AG04450 (cell line): ENCODE measurements at regions of chr22 and their contacts with region 1.

Region 1: DNA sequence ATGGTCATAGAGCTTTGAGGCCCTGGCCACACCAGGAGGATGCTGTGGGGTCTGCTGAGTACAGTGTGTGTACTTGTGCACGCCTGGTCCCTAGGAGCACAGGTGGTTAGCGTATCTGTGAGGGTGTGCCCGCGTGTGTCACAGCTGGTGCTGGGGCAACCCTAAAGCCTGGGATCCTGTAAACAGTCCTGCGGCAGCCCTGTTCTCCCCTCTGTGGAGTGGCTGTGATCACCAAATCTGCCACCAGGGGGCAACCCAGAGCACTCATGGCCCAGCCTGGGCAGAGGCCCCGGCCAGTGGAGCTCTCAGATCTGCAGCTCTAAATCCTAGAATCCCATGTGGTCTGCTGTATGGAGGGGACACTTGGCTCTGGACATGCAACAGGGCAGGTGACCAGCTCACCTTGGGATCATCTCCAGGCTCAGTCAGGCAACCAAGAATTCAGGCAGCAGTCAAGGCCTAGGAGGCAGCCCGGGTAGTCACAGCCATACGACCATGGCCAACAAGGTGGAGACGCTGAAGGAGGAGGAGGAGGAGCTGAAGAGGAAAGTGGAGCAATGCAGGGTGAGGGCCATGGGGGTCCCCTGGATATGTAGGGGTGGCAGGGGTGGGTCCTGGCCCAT is 3.9 kb downstream of the SH3BP1 start:
- DNase-seq: peak; percentile 11
- H3K4me3 ChIP-seq: no peak overlapping the region
- H3K27ac ChIP-seq: no peak overlapping the region
- H3K27me3 ChIP-seq: no peaks in the 10 kb centered on the region
- CTCF ChIP-seq: peak; percentile 96

Region 2: GRCh38 chr22:37625737-37626521 is 17.4 kb before region 1 on chr22:
- CTCF ChIA-PET with region 1: interaction called, 57 read pairs
- POLR2A ChIA-PET with region 1: interaction called, 3 read pairs
- DNase-seq: no peak
- H3K4me3 ChIP-seq: no peak overlapping the region
- H3K27ac ChIP-seq: peak overlapping the region; percentile 21
- H3K27me3 ChIP-seq: no peaks in the 10 kb centered on the region
- CTCF ChIP-seq: no peak

Region 3: DNA sequence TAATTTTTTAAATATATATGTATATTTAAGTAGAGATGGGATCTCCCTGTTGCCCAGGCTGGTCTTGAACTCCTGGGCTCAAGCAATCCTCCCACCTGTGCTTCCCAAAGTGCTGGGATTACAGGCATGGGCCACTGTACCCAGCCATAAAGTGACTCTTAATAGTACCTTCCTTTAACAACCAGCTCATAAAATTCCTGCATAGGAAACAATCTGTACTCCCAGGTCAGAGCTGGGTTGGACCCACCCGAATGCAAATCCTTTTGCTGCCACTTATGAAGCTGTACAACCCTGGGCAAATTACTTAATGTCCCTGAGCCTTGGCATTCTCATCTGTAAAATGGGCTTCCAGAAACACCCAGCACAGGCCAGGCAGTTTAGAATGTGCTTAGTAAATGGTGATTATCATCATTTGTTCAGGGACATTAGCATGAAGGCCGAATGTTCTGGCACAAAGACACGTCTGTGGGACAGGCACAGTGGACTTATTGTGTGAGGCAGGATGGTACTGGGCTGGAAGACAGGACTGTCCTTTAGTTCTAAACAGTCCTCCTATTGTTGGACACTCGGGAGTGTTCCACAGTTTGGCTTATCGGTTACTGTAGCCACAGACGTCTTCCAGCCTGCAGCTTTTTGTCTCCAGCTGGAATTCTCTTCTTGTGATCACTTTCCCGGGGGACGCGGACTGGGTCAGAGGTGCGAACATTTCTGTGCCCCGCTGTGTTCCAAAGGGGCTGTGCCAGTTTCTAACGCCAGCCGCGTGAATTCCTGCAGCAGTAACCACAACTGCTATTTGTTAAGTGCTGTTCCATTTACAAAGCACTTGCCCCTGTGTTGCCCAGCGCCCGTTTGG is 21.1 kb after region 1 on chr22:
- CTCF ChIA-PET with region 1: interaction called, 54 read pairs
- POLR2A ChIA-PET with region 1: interaction called, 7 read pairs
- DNase-seq: no peak
- H3K4me3 ChIP-seq: no peak overlapping the region
- H3K27ac ChIP-seq: peak overlapping the region; percentile 21
- H3K27me3 ChIP-seq: no peaks in the 10 kb centered on the region
- CTCF ChIP-seq: no peak

Region 4: DNA sequence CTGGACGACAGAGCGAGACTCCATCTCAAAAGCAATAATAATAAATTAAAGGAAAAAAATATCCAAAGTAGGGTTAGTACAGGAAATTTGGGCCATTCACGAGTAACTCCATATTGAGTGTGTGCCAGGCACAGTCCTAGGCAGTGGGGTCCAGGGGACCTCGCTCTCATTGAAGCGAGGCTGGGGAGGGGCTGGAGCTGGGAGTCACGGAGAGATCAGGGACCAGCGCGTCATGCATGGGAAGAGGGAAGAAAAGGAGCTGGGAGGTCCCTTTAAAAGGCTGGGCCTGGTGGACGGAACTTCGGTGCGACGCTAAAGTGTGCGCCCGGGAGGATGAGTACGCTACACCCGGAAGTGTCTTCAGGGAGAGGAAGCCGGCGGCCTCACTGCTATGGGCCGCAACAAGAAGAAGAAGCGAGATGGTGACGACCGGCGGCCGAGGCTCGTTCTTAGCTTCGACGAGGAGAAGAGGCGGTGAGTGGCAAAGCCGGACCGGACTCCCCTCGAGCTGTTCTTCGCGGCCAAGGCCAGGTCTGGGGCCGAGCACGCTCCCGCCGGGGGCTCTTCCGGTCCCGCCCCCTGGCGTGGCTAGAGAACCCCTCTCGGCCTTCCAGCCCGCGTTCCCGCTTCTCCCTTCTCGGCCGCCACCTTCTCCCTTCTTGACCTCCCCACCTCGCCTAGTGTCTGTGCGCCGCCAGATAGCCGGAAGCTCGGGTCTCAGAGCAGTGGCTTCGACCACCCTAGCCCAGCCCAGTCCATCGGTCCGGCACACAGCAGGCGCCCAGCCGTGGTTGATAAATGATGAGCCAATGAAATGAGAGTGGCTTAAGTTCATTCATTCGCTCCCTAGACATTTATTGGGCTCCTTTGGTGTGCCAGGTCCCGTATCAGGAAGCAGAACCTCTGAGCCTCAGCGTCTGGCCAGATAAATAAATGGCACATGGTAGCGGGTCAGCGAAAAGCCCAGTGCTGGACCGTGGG is 43.0 kb after region 1 on chr22 and contains the start of gene NOL12:
- CTCF ChIA-PET with region 1: interaction called, 101 read pairs
- POLR2A ChIA-PET with region 1: interaction called, 17 read pairs
- DNase-seq: no peak
- H3K4me3 ChIP-seq: peak within 1 kb of the TSS; percentile 97
- H3K27ac ChIP-seq: peak within 1 kb of the TSS; percentile 83
- H3K27me3 ChIP-seq: no peaks in the 10 kb centered on the region
- CTCF ChIP-seq: no peak
- polyA plus RNA-seq, gene NOL12: 10.4 and 11.8 TPM in 2 replicates

Region 5: DNA sequence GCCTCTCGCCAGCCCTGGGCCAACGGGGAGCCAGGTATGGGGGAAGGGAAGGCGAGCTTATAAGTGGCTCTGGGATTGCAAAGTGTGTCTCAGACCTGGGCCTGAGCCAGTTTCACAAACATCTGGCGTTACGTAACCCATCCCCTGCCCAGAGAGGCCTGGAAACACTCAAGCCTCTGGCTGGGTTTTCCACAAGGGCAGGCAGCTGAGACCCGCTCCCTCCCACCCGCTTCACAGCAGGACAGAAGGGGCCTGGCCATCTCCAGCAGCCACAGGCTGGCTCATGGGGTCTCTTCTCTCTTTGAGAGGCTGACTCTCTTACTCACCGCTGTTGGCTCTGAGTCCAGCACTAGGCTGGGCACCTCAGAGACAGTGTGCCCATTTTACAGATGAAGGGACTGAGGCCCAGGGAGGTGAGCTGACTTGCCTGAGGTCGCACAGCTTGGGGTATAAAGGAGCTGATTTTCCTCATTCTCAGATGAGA is 98.0 kb after region 1 on chr22:
- CTCF ChIA-PET with region 1: interaction called, 10 read pairs
- POLR2A ChIA-PET with region 1: no interaction called
- DNase-seq: peak; percentile 98
- H3K4me3 ChIP-seq: no peak overlapping the region
- H3K27ac ChIP-seq: peak overlapping the region; percentile 89
- H3K27me3 ChIP-seq: no peaks in the 10 kb centered on the region
- CTCF ChIP-seq: no peak

Region 6: DNA sequence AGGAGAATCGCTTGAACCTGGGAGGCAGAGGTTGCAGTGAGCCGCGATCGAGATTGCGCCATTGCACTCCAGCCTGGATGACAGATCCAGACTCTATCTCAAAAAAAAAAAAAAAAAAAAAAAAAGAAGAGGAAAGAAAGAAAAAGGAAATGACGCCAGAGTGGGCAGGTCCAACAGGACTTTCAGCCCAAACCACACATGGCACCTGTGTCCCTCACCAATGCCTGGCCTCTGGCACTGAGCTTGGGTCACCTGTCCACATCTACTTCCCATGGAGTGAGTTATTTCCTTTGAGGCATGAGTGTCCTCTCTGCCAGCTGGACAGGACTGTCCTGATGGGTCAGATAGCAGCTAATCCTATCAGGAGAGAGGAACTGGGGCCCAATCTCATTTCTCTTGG is 149.2 kb after region 1 on chr22:
- CTCF ChIA-PET with region 1: interaction called, 38 read pairs
- POLR2A ChIA-PET with region 1: no interaction called
- DNase-seq: no peak
- H3K4me3 ChIP-seq: no peak overlapping the region
- H3K27ac ChIP-seq: no peak overlapping the region
- H3K27me3 ChIP-seq: no peaks in the 10 kb centered on the region
- CTCF ChIP-seq: no peak